ENCODE measurements at regions of chr16 and their contacts with region 1.

Region 1: DNA sequence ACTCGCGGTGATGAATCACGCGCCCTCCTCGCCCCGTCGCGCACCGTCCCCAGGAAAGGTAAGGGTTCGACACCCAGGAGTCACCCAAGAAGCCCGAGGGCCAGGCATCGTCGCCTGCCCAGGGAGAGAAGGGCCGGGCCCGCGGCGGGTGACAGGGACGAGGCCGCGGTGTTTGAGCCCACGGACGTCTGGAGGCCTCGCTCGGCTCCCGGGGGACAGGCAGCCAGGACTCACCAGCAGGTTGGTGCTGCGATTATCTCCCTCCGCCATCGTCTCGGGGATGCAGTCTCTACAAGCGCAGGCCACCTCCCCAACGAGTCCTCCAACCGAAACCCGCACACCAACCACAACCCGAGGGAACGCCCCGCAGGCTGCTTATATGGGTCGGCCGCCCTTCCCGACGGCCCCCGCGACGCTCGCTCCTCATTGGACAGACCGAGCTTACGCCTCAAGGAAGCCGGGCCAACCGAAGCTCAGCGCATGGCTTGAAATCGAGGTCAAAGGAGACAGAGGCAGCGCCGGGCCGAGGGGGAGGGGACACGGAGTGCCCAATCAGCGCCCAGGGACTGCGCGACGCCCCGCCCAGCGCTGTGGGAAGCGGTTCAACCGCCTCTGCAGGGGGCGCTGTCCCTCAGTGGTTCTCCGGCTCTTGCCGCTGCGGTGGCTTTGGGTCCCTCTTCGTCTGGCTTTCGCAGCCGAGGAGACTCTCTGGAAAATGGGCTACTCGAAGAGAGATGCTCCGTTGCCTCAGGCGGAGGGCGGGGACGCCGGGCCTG is at the start of gene ARL6IP1:
- DNase-seq: peak; percentile 99
- ATAC-seq: peak; percentile 98
- H3K4me3 Mint-ChIP-seq: peak within 1 kb of the TSS; percentile 86
- H3K27ac Mint-ChIP-seq: peak within 1 kb of the TSS; percentile 99
- H3K4me1 Mint-ChIP-seq: peaks cover 47% of the 10 kb centered on the region
- H3K27me3 Mint-ChIP-seq: no peaks in the 10 kb centered on the region
- total RNA-seq, gene ARL6IP1: 92.0 to 102 TPM

Region 2: DNA sequence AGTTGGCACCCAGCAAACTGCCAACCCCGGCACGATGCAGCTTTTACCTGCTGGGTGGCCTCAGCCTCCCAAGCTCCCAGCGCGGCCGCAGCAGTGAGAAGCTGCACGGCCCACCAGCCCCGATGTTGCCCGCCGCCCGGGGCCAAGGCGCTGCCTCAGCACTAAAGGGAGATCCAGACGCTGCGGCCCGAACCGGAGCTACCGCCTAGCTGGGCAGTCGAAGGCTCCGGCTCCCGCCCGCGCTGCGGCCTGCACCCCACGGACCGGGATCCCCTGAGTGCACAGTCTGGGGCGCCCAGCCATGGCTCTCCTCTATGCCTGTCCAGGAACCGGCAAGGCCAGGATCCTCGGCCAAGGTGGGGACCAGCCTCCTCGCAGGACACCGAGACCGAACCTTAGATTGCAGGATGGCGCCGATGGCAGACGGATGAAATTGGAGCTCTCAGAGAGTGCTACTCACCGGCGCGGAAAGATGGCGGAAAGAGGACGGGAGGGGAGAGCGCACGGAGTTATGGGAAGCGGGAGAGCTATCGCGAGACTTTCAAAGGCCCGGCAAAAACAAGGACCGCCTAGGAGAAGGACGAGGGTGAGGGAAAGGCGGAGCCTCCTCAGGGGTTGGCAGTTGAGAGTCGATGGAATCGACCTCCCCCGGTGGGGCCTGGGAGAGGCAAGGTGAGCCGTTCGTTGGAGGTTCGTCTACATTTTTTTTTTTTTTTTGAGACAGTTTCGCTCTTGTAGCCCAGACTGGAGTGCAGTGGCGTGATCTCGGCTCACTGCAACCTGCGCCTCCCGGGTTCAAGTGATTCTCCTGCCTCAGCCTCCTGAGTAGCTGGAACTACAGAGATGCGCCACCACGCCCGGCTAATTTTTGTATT is 11.3 kb before region 1 on chr16 and contains the start of gene RPS15A:
- CTCF ChIA-PET with region 1: interaction called, 34 read pairs
- POLR2A ChIA-PET with region 1: interaction called, 119 read pairs
- intact Hi-C with region 1: loop called (anchors 1 kb)
- DNase-seq: peak; percentile 96
- ATAC-seq: peak; percentile 96
- H3K4me3 Mint-ChIP-seq: peak within 1 kb of the TSS; percentile 99
- H3K27ac Mint-ChIP-seq: peak within 1 kb of the TSS; percentile 99
- H3K4me1 Mint-ChIP-seq: peaks cover 40% of the 10 kb centered on the region
- H3K27me3 Mint-ChIP-seq: no peaks in the 10 kb centered on the region
- total RNA-seq, gene RPS15A: 1,904 to 2,150 TPM

Region 3: GRCh38 chr16:18839555-18839954 is 38.2 kb after region 1 on chr16:
- CTCF ChIA-PET with region 1: interaction called, 10 read pairs
- POLR2A ChIA-PET with region 1: no interaction called
- intact Hi-C with region 1: loop called (anchors 2 to 5 kb)
- DNase-seq: no peak
- ATAC-seq: no peak
- H3K4me3 Mint-ChIP-seq: no peak overlapping the region
- H3K27ac Mint-ChIP-seq: no peak overlapping the region
- H3K4me1 Mint-ChIP-seq: peaks cover 16% of the 10 kb centered on the region
- H3K27me3 Mint-ChIP-seq: no peaks in the 10 kb centered on the region

Region 4: DNA sequence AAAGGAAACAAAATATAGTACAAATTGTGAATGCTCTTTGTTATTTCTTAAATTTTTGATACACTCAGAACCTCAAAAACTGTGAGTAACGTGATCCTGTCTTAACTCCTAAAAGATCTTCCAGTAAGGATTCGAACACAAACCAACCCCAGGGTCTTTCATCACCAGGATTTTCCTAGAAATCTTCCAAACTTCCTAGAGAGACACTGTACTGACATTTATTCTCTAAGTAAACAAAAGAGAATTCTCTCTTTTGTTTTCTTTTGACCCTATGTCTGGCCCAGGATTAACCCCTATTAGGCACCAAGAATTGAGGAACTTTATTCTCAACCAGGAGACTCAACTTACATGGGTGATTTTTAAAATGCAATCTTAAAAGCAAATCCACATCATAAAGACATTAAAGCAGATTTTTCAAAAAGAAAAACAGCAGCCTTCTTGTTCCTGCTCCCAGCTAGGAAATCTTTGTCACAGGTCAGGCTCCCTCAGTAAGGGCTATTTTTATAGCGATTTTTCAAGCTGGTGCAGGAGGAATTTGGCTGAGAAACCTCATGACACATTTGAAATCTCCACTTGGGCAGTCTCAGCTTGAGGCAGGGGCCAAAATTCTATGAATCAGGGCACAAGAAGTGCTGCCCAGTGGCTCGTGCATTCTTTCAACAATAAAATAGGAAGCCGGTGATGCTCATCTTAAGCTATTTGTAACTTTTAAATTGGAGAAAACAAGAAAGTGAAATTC is 131.0 kb after region 1 on chr16:
- CTCF ChIA-PET with region 1: no interaction called
- POLR2A ChIA-PET with region 1: no interaction called
- intact Hi-C with region 1: no loop called
- DNase-seq: no peak
- ATAC-seq: no peak
- H3K4me3 Mint-ChIP-seq: no peak overlapping the region
- H3K27ac Mint-ChIP-seq: no peak overlapping the region
- H3K4me1 Mint-ChIP-seq: peaks cover 4% of the 10 kb centered on the region
- H3K27me3 Mint-ChIP-seq: no peaks in the 10 kb centered on the region

Region 5: GRCh38 chr16:18969050-18969854 is 167.9 kb after region 1 on chr16:
- CTCF ChIA-PET with region 1: interaction called, 7 read pairs
- POLR2A ChIA-PET with region 1: no interaction called
- intact Hi-C with region 1: loop called (anchors 1 kb)
- DNase-seq: peak; percentile 89
- ATAC-seq: peak; percentile 94
- H3K4me3 Mint-ChIP-seq: no peak overlapping the region
- H3K27ac Mint-ChIP-seq: peak overlapping the region; percentile 16
- H3K4me1 Mint-ChIP-seq: peaks cover 6% of the 10 kb centered on the region
- H3K27me3 Mint-ChIP-seq: no peaks in the 10 kb centered on the region

Region 6: GRCh38 chr16:19153876-19154275 is 352.5 kb after region 1 on chr16:
- CTCF ChIA-PET with region 1: no interaction called
- POLR2A ChIA-PET with region 1: no interaction called
- intact Hi-C with region 1: no loop called
- DNase-seq: peak; percentile 14
- ATAC-seq: no peak
- H3K4me3 Mint-ChIP-seq: no peak overlapping the region
- H3K27ac Mint-ChIP-seq: no peak overlapping the region
- H3K4me1 Mint-ChIP-seq: no peaks in the 10 kb centered on the region
- H3K27me3 Mint-ChIP-seq: peaks cover 8% of the 10 kb centered on the region

Region 7: DNA sequence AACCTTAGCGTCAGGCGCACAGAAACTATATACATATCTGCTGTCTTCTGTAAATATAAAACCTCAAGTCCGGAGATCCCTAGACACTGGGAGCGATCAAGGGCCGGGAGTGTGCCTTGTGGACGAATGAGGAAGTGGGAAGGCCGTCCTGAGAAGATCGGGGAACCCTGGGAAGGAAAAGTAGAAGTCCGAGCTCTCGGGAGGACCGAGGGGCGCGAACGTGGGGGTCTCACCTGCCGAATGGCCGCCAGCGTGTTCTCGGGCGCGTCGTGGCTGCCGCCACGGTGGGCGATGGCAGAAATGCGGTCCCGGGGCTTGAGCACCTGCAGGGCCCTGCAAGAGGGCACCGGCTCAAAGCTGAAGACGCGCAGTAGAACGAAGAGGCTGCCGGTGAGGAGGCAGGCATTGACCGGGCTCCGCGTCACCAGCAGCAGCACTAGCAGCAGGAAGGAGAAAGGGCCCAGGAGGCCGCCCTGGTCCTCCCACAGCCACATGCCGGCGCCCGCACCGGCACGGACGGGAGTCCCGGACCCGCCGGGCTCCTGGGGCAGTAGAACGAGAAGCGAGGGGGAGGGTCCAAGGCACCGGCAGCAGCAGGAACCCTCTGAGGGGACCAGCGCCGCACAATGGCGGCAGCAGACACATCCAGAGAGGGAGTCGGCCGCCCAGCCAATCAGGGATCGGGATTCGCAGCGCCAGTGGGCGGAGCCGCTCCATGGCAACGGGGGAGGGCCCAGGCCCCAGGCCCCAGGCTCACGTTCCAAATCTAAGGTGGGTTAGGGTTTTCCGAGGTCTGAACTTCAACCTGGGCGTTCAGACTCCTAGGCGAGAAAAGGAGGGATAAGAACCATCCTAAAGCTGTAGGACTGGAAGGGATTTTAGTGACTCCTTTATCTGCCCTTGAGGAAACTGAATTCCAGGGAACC is 720.3 kb after region 1 on chr16 and contains the start of gene GDE1:
- CTCF ChIA-PET with region 1: no interaction called
- POLR2A ChIA-PET with region 1: no interaction called
- intact Hi-C with region 1: loop called (anchors 1 to 2 kb)
- DNase-seq: peak; percentile 97
- ATAC-seq: peak; percentile 83
- H3K4me3 Mint-ChIP-seq: peak within 1 kb of the TSS; percentile 94
- H3K27ac Mint-ChIP-seq: peak within 1 kb of the TSS; percentile 90
- H3K4me1 Mint-ChIP-seq: peaks cover 45% of the 10 kb centered on the region
- H3K27me3 Mint-ChIP-seq: no peaks in the 10 kb centered on the region
- total RNA-seq, gene GDE1: 13.8 to 18.1 TPM

Region 8: GRCh38 chr16:19700319-19700781 is 899.0 kb after region 1 on chr16:
- CTCF ChIA-PET with region 1: no interaction called
- POLR2A ChIA-PET with region 1: no interaction called
- intact Hi-C with region 1: no loop called
- DNase-seq: no peak
- ATAC-seq: no peak
- H3K4me3 Mint-ChIP-seq: no peak overlapping the region
- H3K27ac Mint-ChIP-seq: peak overlapping the region; percentile 37
- H3K4me1 Mint-ChIP-seq: peaks cover 56% of the 10 kb centered on the region
- H3K27me3 Mint-ChIP-seq: no peaks in the 10 kb centered on the region

Region 9: GRCh38 chr16:20191566-20191965 is 1390.2 kb after region 1 on chr16:
- CTCF ChIA-PET with region 1: no interaction called
- POLR2A ChIA-PET with region 1: no interaction called
- intact Hi-C with region 1: no loop called
- DNase-seq: no peak
- ATAC-seq: no peak
- H3K4me3 Mint-ChIP-seq: no peak overlapping the region
- H3K27ac Mint-ChIP-seq: no peak overlapping the region
- H3K4me1 Mint-ChIP-seq: no peaks in the 10 kb centered on the region
- H3K27me3 Mint-ChIP-seq: peaks cover 4% of the 10 kb centered on the region

Measured in activated CD4-positive, alpha-beta T cell treated with anti-CD3 and anti-CD28 coated beads for 36 hours (primary cell).